GM18951 (cell line): ENCODE measurements at regions of chr7 and their contacts with region 1.

Region 1: GRCh38 chr7:104923010-104923421 is 91.0 kb upstream of the KMT2E start:
- POLR2A ChIP-seq: no peak

Region 2: DNA sequence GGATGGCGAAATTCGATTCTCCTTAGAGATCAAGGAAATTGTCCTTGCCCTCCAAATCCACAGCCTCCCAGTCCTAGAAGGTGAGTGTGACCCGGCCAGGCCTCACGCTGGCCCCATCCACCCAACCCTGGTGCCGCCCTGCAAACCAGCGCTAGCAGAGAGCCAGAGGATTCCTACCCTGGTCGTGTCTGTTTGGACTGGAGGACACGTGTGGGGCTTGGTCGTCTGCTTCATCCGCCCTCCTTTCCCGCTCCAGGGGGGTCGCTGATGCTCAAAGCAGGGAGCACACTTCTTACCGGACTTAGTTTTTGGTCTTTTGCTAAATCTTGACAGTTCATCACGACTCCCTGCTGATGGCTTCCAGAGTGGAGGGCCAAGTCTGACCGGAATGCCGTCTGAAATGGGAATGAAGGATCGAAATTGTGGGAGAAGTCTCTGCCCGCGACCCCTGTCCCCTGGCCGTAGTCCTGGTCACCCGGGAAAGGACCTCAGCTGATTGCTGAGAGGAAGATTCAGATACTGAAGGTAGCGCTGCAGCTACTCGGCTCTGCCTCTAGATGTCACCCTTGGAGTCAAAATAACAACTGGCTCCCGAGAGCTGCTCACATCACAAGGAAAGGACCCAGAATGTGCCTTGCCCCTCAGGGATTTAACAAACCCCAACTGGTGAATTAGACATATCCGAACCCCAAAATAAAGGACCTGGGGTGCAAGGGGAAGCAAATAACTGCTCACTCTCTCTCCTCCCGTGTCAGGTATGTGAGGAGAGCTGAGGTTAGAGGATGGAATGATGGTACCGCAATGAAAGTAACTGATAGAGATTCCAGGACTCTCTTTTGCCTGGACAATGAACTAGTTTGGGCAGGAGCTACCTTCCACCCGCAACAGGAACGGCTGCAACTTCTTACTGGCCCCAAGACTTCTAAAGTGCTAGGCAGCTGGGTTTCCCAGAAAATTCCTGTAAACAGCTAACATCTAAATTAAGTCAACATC is 691.7 kb before region 1 on chr7:
- in situ Hi-C with region 1: loop called (anchors 25 kb)
- POLR2A ChIP-seq: no peak

Region 3: DNA sequence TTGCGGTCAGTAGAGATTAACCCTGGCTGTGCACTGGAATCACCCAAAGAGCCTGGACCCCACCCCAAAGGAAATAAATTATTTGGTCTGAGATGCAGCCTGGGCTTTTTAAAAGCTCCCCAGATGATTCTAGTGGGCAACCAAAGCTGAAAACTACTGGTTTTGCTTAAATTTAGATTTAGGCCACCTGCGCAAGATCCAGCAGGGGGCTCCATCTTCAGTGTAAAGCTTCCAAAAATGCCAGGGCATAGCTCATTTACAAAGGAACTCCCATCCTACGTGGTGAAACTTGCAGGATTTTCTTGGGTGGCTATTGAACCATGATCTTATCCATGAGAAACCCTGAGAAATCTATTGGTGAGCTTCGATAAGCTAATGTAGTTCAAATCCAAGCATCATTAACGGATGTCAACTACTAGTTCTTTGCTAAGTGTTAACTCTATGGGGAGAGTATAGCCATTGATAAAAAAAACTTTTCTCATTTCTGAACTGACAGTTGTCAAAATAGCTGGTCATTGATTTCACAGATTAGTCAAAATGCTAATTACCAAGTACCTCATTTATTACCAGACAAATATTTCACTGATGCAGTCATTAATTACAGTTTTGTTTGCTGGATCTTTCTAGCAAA is 279.3 kb before region 1 on chr7:
- in situ Hi-C with region 1: loop called (anchors 5 kb)
- POLR2A ChIP-seq: no peak